Activated T-helper 1 cell treated with anti-CD3 and anti-CD28 coated beads, Interleukin-12 subunit alpha, Interleukin-12 subunit beta, Interleukin-2, Interleukin-4 antibody, amounts not matched to agents 30 ng/mL and 10 ng/mL and 1 ng/mL, durations not matched to agents 14 hours and 24 hours and 36 hours (primary cell): ENCODE measurements at regions of chr17 and their contacts with region 1.

Region 1: DNA sequence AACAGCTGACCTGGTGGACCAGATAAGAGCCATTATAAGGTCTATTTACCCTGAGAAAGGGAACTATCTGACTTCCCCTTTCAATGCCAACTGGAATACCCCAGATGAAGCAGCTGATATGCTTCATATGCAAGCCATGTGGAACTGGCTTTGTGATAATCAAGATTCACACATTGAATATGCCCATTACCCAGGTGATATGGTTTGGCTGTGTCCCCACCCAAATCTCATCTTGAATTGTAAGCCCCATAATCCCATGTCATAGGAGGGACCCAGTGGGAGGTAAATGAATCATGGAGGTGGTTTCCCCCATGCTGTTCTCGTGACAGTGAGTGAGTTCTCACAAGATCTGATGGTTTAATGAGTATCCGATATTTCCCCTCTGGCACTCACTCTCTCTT is 42.1 kb downstream of the IKZF3 start:
- DNase-seq: no peak
- H3K4me3 Mint-ChIP-seq: no peak overlapping the region
- H3K27ac Mint-ChIP-seq: peak overlapping the region; percentile 47
- H3K4me1 Mint-ChIP-seq: peaks cover 45% of the 10 kb centered on the region
- H3K27me3 Mint-ChIP-seq: no peaks in the 10 kb centered on the region

Region 2: DNA sequence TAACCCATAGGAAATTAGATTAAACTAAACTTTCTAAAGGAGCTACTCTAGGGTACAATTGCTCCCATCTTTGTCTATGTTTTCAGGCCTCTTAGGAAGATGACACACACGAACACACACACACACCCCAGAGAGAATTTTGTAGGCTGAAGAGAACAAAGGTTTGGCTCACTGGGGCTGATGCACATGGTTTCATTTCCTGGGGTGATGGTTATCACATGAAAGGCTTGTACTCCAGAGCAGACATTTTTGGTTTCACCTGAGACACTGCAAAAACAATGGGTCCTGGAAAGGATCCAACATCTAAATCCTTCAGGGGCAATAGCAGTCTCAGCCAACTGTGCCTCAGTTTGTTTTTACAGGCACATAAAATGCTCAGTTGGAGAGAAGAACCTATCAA is 21.5 kb before region 1 on chr17:
- intact Hi-C with region 1: loop called (anchors 1 kb)
- DNase-seq: peak; percentile 54
- H3K4me3 Mint-ChIP-seq: peak overlapping the region; percentile 45
- H3K27ac Mint-ChIP-seq: peak overlapping the region; percentile 75
- H3K4me1 Mint-ChIP-seq: peaks cover 40% of the 10 kb centered on the region
- H3K27me3 Mint-ChIP-seq: no peaks in the 10 kb centered on the region

Region 3: DNA sequence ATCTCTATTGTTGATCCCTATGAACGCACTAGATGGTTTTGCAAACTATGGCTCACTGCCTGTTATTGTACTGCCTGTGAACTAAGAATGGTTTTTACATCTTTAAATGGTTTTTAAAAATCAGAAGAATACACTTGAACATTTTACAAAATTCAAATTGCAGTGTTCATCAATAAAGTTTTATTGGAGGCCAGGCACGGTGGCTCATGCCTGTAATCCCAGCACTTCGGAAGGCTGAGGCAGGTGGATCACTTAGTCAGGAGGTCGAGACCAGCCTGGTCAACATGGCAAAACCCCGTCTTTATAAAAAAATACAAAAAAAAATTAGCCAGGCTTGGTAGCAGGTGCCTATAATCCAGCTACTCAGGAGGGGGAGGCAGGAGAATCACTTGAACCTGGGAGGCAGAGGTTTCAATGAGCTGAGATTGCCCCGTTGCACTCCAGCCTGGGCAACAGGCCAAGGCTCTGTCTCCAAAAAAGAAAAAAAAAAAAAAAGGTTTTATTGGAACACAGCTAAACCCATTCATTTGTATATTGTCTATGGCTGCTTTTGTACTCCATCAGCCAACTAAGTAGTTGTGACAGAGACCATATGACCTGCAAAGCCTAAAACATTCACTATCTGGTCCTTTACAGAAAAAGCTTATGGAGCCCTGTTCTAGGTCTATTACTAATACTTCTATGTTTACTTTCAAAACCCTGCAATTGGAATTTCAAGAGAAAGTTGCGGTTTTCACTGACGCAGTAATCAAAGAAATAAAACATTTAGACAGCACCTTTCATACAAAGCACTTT is 23.2 kb after region 1 on chr17:
- intact Hi-C with region 1: no loop called
- DNase-seq: no peak
- H3K4me3 Mint-ChIP-seq: no peak overlapping the region
- H3K27ac Mint-ChIP-seq: no peak overlapping the region
- H3K4me1 Mint-ChIP-seq: peaks cover 48% of the 10 kb centered on the region
- H3K27me3 Mint-ChIP-seq: peaks cover 2% of the 10 kb centered on the region